ENCODE measurements at regions of chr12 and their contacts with region 1.

Region 1: GRCh38 chr12:27014085-27014858 is at the start of gene TM7SF3:
- DNase-seq: peak; percentile 97
- H3K4me3 ChIP-seq: peak within 1 kb of the TSS; percentile 93
- H3K27ac ChIP-seq: peak within 1 kb of the TSS; percentile 63
- H3K4me1 ChIP-seq: peaks cover 55% of the 10 kb centered on the region
- CTCF ChIP-seq: peak; percentile 94
- total RNA-seq, gene TM7SF3: 38.2 and 48.3 TPM in 2 replicates

Region 2: DNA sequence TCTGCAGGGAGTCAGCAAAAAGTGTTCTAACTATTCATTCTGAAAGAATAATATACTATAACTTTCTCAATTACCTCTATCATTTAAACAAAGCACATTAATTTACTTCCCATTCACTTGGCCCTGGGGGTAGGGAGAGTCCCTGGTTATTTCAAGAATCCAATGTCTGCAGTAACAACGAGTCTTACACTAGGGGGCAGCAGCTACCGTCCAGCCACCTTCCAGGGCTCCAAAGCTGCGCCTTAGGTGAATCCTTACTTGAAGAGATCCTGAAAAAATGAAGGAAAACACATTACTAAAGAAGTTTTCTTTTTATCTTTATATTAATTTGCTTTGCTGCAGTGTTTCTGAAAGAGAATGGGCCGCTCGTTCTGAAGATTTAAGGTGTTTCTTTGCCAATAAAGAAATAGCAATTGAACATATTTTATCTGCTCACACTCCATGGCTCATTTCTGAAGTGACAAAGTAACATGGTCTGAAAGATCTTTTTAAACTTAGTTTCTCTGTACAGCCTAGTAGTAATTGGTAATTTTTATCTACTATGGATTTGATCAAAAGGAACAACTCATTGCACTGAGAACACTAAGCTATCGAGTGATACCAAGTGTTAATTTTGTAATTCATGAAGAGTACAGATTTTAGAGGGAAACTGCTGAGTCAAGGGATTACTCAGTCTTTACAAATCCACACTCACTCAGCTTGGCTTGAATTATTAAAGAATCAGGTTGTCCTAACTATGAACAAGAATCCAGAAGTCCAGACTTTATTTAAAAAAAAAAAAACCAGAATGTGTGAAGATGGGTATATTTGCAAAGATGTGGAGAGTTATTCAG is 917.0 kb before region 1 on chr12:
- CTCF ChIA-PET with region 1: no interaction called
- POLR2A ChIA-PET with region 1: no interaction called
- intact Hi-C with region 1: loop called (anchors 5 kb)
- DNase-seq: peak; percentile 64
- H3K4me3 ChIP-seq: no peak overlapping the region
- H3K27ac ChIP-seq: no peak overlapping the region
- H3K4me1 ChIP-seq: no peaks in the 10 kb centered on the region
- CTCF ChIP-seq: peak; percentile 98

Region 3: DNA sequence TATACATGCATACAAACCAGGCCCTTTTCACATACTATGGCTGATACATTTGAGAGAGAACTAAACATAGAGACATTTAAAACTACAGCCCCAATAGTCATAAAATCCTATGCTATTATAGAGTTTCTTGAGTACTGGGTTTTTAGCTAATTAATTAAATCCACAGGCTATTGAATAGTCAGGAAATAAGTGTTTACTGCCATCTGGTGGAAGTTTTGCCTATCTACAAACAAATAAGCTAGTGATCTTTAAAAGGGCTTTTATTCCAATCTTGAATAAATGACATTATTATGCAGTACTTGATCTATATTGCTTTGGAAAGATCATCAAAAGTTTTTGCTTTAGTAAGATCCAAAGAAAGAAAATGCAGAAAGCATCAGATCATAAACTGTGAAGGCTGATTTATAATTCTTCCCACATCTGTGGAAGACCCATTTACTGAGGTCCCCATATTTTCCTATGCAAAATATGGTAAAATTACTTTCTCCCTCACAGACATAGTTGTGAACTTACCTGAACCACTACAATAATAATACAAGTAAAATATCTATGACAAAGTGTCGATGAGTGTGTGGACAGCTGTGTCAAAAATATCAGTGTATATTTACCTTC is 312.6 kb before region 1 on chr12:
- CTCF ChIA-PET with region 1: no interaction called
- POLR2A ChIA-PET with region 1: no interaction called
- intact Hi-C with region 1: loop called (anchors 10 kb)
- DNase-seq: peak; percentile 54
- H3K4me3 ChIP-seq: no peak overlapping the region
- H3K27ac ChIP-seq: no peak overlapping the region
- H3K4me1 ChIP-seq: peaks cover 12% of the 10 kb centered on the region
- CTCF ChIP-seq: peak; percentile 87

Region 4: DNA sequence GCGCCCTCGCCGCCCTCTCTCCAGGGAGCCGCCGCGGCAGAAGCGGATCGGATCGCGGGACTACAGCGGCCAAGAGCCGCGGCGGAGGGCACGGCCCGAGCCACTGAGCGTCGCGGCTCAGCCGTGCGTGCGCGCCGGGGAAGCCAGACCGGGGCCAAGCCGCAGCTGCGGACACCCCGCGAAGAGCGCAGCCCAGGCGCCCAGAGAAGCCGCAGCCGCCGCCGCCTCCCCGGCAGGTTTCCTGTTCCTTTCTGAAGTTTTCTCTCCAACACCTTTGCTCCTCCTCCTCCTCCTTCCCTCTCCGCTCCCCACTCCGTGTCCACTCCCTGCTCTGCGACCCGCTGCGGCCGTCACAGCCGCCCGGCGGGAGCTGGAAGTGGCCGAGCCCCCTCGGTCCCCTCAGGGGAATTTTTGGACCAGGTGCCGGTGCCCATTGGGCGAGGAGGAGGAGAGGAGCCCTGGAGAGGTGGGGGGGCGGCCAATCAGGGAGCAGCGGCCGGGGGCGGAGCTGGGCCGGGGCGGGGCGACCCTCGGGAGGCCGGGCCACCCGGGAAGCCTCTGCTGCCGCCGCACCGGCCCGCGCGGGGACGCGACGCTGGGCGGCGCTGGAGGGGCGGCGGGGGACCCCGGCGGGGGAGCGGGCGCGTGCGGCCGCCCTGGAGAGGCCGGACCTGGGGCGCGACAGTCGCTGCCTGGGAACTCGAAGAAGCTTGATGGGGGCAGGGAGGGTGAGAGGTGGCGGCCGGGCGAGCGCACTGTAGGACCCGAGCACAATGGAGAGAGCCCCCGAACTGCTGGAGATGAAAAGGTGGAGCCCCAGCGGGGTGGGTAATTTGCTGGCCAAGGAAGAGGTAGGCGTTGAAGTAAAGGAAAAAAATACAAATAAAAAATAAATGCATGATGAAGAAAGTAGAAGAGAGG is 181.2 kb before region 1 on chr12 and contains the start of gene ITPR2:
- CTCF ChIA-PET with region 1: interaction called, 5 read pairs
- POLR2A ChIA-PET with region 1: interaction called, 6 read pairs
- intact Hi-C with region 1: loop called (anchors 1 kb)
- DNase-seq: peak; percentile 95
- H3K4me3 ChIP-seq: peak within 1 kb of the TSS; percentile 86
- H3K27ac ChIP-seq: peak within 1 kb of the TSS; percentile 73
- H3K4me1 ChIP-seq: peaks cover 46% of the 10 kb centered on the region
- CTCF ChIP-seq: peak; percentile 41
- total RNA-seq, gene ITPR2: 25.6 and 33.7 TPM in 2 replicates

Region 5: GRCh38 chr12:26937875-26938700 is 76.2 kb before region 1 on chr12 and contains the starts of genes FGFR1OP2 and INTS13:
- CTCF ChIA-PET with region 1: no interaction called
- POLR2A ChIA-PET with region 1: interaction called, 4 read pairs
- intact Hi-C with region 1: loop called (anchors 1 kb)
- DNase-seq: peak; percentile 98
- H3K4me3 ChIP-seq: peak within 1 kb of the TSS; percentile 89
- H3K27ac ChIP-seq: peak within 1 kb of the TSS; percentile 79
- H3K4me1 ChIP-seq: peaks cover 48% of the 10 kb centered on the region
- CTCF ChIP-seq: no peak
- total RNA-seq, gene FGFR1OP2: 35.0 and 45.0 TPM in 2 replicates
- total RNA-seq, gene INTS13: 33.4 and 34.2 TPM in 2 replicates

Region 6: GRCh38 chr12:27048822-27049752 is 34.8 kb after region 1 on chr12:
- CTCF ChIA-PET with region 1: no interaction called
- POLR2A ChIA-PET with region 1: no interaction called
- intact Hi-C with region 1: no loop called
- DNase-seq: no peak
- H3K4me3 ChIP-seq: no peak overlapping the region
- H3K27ac ChIP-seq: no peak overlapping the region
- H3K4me1 ChIP-seq: no peaks in the 10 kb centered on the region
- CTCF ChIP-seq: no peak

Region 7: DNA sequence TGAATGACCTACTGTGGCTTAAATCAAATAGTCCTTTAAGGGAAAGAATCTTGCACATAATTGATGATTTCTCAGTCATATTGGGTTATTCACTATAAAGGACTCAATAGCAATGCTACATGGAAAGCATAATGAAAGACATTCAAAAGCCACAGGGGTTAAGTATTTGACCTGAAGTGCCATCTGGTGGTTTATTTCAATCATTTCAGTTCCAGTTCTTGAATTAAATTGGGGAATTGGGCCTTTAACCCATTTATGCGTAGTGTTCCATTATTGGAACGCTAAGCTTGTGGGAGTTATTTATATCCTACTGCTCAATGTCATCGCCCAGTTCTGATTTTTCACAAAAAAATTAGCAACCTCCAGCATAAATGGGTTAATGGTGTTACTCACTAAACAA is 109.4 kb after region 1 on chr12:
- CTCF ChIA-PET with region 1: no interaction called
- POLR2A ChIA-PET with region 1: no interaction called
- intact Hi-C with region 1: no loop called
- DNase-seq: peak; percentile 33
- H3K4me3 ChIP-seq: no peak overlapping the region
- H3K27ac ChIP-seq: no peak overlapping the region
- H3K4me1 ChIP-seq: no peaks in the 10 kb centered on the region
- CTCF ChIP-seq: peak; percentile 64

Region 8: DNA sequence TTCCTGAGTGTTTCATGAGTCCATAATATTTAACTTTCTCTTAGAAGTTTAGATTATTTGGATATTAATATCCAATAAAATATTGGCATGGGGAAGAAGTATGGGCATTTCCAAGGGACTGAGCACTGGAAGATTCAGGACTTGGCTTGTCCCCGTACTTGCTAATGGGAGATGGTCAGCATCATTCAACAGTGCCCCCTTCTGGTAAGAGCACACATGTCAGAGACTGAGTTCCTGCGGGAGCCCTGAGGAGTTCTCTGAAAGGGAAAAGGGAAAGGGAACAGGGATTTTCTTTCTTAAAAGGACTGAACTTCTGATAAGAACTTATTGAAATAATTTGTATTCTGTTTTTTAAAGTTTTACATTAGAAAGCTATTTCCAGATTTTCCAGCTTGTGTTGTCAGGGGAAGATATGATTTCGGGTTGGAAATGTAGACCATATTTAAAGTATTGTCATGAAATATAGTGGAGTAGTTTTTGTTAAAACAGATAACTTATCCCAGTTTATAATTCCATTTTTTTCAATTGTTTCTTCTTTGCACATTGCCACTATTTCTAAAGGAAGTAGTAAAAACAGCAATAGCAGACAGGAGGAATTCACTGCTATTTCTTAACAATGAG is 127.9 kb after region 1 on chr12:
- CTCF ChIA-PET with region 1: no interaction called
- POLR2A ChIA-PET with region 1: no interaction called
- intact Hi-C with region 1: loop called (anchors 5 kb)
- DNase-seq: peak; percentile 57
- H3K4me3 ChIP-seq: no peak overlapping the region
- H3K27ac ChIP-seq: no peak overlapping the region
- H3K4me1 ChIP-seq: no peaks in the 10 kb centered on the region
- CTCF ChIP-seq: peak; percentile 97

Region 9: GRCh38 chr12:27305673-27306456 is 291.6 kb after region 1 on chr12:
- CTCF ChIA-PET with region 1: interaction called, 11 read pairs
- POLR2A ChIA-PET with region 1: interaction called, 4 read pairs
- intact Hi-C with region 1: loop called (anchors 2 kb)
- DNase-seq: peak; percentile 57
- H3K4me3 ChIP-seq: no peak overlapping the region
- H3K27ac ChIP-seq: no peak overlapping the region
- H3K4me1 ChIP-seq: no peaks in the 10 kb centered on the region
- CTCF ChIP-seq: peak; percentile 89

Measured in OCI-LY7 (cell line).